ENCODE measurements at regions of chr11 and their contacts with region 1.

Region 1: GRCh38 chr11:108871152-108871551 is 206.3 kb downstream of the DDX10 start:
- DNase-seq: peak; percentile 3
- H3K4me3 ChIP-seq: no peak overlapping the region
- H3K27ac ChIP-seq: no peak overlapping the region
- H3K27me3 ChIP-seq: no peaks in the 10 kb centered on the region
- CTCF ChIP-seq: peak; percentile 72

Region 2: GRCh38 chr11:108664730-108665525 is 206.2 kb before region 1 on chr11 and contains the start of gene DDX10:
- CTCF ChIA-PET with region 1: interaction called, 12 read pairs
- POLR2A ChIA-PET with region 1: no interaction called
- DNase-seq: peak; percentile 97
- H3K4me3 ChIP-seq: peak within 1 kb of the TSS; percentile 79
- H3K27ac ChIP-seq: peak within 1 kb of the TSS; percentile 34
- H3K27me3 ChIP-seq: no peaks in the 10 kb centered on the region
- CTCF ChIP-seq: peak; percentile 8; the same call in 1 of the 2 replicates
- polyA plus RNA-seq, gene DDX10: 20.3 and 27.1 TPM in 2 replicates

Region 3: DNA sequence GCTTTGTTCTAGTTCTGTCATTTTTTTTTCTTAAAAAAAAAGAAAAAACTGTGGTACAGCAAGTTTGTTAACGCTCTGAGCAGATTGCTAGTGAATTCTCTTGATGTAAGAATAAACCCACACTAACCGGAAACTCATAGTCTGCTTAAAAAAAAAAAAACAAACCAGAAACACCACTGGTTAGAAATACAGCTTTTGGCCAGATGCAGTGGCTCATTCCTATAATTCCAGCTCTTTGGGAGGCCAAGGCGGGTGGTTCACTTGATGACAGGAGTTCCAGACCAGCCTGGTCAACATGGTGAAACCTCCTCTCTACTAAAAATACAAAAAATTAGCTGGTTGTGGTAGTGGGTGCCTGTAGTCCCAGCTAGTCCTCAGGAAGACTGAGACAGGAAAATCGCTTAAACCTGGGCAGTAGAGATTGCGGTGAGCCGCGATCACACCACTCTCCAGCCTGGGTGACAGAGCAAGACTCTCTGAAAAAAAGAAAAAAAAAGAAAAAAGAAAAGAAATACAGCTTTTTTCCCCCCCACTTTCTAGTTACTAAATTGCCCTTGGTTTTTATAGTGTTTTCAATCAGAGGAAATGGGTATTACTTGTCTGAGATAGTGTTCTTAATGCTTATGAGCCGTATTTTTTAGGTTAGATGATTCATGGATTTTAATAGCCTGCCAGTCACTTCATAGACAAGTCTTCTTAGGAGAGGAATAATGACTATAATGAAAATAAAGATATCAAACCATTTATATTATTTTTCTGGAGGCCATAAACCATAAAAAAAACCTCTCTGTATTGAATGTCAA is 16.5 kb after region 1 on chr11:
- CTCF ChIA-PET with region 1: interaction called, 11 read pairs
- POLR2A ChIA-PET with region 1: no interaction called
- DNase-seq: no peak
- H3K4me3 ChIP-seq: no peak overlapping the region
- H3K27ac ChIP-seq: no peak overlapping the region
- H3K27me3 ChIP-seq: no peaks in the 10 kb centered on the region
- CTCF ChIP-seq: no peak